ENCODE measurements at regions of chr21 and their contacts with region 1.

Region 1: DNA sequence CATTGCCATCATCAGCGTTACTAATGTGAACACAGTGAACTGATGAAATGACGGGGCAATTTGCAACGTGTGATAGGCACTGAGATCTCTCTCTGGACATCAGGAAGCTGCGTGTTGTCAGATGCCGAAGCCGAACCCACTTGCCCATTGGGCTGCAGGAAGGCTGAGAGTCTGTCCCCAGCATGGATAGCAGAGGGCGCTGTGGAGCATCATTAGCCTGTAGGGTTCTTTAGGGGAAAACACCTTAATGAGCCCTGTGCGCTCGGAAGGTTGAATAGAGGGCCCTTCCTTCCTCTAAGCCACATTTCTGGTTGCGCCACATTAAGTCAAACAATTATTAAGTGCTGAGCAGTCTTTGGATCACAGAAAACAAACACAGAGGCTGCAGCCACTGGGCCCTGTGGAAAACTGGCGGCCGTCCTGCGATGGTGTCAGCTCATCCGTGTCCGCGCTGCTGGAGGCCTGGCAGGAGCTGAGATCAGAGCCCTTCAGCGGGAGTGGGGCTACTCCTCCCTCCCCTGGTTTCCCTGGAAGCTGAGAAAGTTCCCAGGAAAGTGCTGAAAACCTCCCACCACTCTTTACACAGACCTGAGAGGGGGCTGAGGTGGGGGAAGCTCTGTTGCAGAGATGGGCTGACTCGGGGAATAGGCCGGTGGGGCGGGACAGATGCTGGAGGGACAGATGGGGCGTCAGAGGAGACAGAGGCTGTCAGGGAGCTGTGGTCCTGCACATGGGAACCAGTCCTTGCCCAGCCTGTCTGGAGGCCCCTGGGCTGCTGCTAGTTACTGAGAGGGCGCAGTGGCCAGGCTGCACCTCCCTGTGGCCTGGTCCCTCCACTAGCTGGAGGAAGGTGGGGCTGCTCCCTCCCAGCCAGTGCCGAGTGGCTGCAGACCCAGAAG is 12.7 kb downstream of the TFF2 start:
- DNase-seq: peak; percentile 94
- H3K4me3 Mint-ChIP-seq: no peak overlapping the region
- H3K27ac Mint-ChIP-seq: no peak overlapping the region
- H3K4me1 Mint-ChIP-seq: peaks cover 8% of the 10 kb centered on the region
- H3K27me3 Mint-ChIP-seq: no peaks in the 10 kb centered on the region

Region 2: GRCh38 chr21:41733949-41734645 is 604.0 kb before region 1 on chr21:
- CTCF ChIA-PET with region 1: no interaction called
- intact Hi-C with region 1: no loop called
- DNase-seq: no peak
- H3K4me3 Mint-ChIP-seq: no peak overlapping the region
- H3K27ac Mint-ChIP-seq: peak overlapping the region; percentile 58
- H3K4me1 Mint-ChIP-seq: no peaks in the 10 kb centered on the region
- H3K27me3 Mint-ChIP-seq: peaks cover 14% of the 10 kb centered on the region

Region 3: DNA sequence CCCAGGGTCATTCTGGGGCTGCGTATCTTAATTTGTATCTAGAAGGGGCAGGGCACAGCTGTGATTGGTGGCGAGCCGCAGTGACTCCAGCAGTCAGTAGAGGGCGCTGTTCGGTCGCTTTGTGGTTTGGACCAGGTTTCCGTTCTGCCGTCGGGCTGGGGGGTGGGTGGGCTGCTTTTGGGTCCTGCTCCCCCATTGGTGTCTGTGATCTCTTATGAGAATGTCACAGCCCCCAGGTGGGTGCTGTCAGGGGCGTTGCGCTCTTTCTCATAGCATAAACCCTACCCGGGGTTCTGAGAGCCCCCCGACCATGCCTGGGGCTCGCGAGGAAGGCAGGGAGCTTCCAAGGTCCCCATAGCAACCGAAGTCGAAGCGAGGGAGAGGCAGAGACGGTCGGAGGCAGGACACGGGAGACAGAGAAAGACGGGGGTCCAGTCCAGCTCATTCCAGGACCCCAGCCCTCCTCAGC is 28.3 kb before region 1 on chr21:
- CTCF ChIA-PET with region 1: interaction called, 13 read pairs
- intact Hi-C with region 1: no loop called
- DNase-seq: peak; percentile 86
- H3K4me3 Mint-ChIP-seq: no peak overlapping the region
- H3K27ac Mint-ChIP-seq: no peak overlapping the region
- H3K4me1 Mint-ChIP-seq: peaks cover 3% of the 10 kb centered on the region
- H3K27me3 Mint-ChIP-seq: peaks cover 2% of the 10 kb centered on the region

Region 4: DNA sequence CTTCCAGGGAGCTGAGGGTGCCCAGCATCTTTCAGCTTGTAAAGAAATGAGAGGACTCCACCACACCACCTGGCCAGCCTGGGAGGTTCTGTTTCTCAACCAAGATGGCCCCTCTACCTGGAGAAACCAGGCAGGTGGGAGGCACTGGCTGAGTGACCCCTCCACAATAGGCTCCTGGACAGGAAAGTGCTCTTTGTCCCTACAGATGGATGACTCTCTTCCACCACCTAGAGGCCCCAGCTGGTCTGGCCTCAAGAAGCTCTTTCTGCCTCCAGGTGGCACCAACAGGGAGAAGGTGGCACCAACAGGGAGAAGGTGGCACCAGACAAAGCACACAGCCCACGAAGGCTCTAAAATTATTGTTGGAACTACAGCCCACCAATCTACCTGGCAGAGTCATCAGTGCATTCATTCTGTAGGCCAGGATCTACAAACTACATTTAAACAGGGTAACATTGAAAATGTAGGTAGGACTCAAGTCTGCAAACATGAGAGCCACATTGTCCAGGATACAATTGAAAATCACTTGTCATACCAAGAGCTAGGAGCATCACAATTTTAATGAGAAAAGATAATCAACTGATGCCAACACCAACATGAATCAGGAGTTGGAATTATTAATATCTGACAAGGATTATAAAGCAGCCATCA is 43.4 kb after region 1 on chr21:
- CTCF ChIA-PET with region 1: interaction called, 30 read pairs
- intact Hi-C with region 1: loop called (anchors 1 kb)
- DNase-seq: peak; percentile 81
- H3K4me3 Mint-ChIP-seq: no peak overlapping the region
- H3K27ac Mint-ChIP-seq: no peak overlapping the region
- H3K4me1 Mint-ChIP-seq: peaks cover 5% of the 10 kb centered on the region
- H3K27me3 Mint-ChIP-seq: no peaks in the 10 kb centered on the region

Region 5: GRCh38 chr21:42449296-42449927 is 111.3 kb after region 1 on chr21:
- CTCF ChIA-PET with region 1: interaction called, 15 read pairs
- intact Hi-C with region 1: loop called (anchors 1 kb)
- DNase-seq: no peak
- H3K4me3 Mint-ChIP-seq: no peak overlapping the region
- H3K27ac Mint-ChIP-seq: peak overlapping the region; percentile 86
- H3K4me1 Mint-ChIP-seq: peaks cover 34% of the 10 kb centered on the region
- H3K27me3 Mint-ChIP-seq: no peaks in the 10 kb centered on the region

Region 6: DNA sequence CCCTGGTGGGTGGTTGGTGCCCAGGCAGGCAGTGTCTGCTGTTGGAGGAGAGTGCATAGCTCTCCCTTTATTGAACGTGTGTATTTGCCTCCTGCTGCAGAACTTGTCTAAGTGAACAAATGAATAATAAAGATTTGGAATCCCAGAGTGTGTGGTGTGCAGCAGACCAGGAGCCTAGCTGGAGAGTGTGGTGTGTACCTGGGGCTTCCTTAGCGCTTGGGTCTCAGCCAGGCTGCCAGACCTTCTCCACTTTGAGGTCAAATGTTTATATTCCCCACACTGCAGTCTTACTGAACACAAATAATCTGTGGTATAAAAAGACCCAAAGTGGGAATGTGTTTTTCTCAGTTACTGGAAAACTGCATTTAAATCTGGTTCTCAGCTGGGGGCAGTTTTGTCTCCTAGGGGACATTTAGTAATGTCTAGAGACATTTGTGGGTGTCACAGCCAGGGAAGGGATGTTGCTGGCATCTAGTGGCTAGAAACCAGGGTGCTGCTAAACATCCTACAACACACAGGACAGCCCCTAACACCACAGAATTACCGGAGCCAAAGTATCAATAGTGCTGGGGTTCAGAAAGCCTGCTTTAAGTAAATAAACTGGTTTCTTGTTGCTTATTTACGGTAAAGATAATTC is 199.1 kb after region 1 on chr21:
- CTCF ChIA-PET with region 1: no interaction called
- intact Hi-C with region 1: loop called (anchors 2 kb)
- DNase-seq: peak; percentile 54
- H3K4me3 Mint-ChIP-seq: no peak overlapping the region
- H3K27ac Mint-ChIP-seq: no peak overlapping the region
- H3K4me1 Mint-ChIP-seq: peaks cover 16% of the 10 kb centered on the region
- H3K27me3 Mint-ChIP-seq: no peaks in the 10 kb centered on the region

Region 7: GRCh38 chr21:42677339-42678321 is 339.6 kb after region 1 on chr21:
- CTCF ChIA-PET with region 1: no interaction called
- intact Hi-C with region 1: no loop called
- DNase-seq: no peak
- H3K4me3 Mint-ChIP-seq: no peak overlapping the region
- H3K27ac Mint-ChIP-seq: no peak overlapping the region
- H3K4me1 Mint-ChIP-seq: peaks cover 34% of the 10 kb centered on the region
- H3K27me3 Mint-ChIP-seq: no peaks in the 10 kb centered on the region